SK-N-SH (cell line): ENCODE measurements at regions of chr1 and their contacts with region 1.

Region 1: GRCh38 chr1:6245086-6245868 is 1.3 kb downstream of the HES3 start:
- DNase-seq: peak; percentile 91
- H3K4me3 ChIP-seq: peak overlapping the region; percentile 44 to 48
- H3K27ac ChIP-seq: peak overlapping the region in 1 of 2 experiments; percentile 76; a peak in 2 of 4 replicates
- H3K4me1 ChIP-seq: no peaks in the 10 kb centered on the region; a peak in 1 of 4 replicates
- H3K27me3 ChIP-seq: no peaks in the 10 kb centered on the region
- CTCF ChIP-seq: peak; percentile 65
- EP300 ChIP-seq: no peak
- RAD21 ChIP-seq: peak; percentile 67

Region 2: DNA sequence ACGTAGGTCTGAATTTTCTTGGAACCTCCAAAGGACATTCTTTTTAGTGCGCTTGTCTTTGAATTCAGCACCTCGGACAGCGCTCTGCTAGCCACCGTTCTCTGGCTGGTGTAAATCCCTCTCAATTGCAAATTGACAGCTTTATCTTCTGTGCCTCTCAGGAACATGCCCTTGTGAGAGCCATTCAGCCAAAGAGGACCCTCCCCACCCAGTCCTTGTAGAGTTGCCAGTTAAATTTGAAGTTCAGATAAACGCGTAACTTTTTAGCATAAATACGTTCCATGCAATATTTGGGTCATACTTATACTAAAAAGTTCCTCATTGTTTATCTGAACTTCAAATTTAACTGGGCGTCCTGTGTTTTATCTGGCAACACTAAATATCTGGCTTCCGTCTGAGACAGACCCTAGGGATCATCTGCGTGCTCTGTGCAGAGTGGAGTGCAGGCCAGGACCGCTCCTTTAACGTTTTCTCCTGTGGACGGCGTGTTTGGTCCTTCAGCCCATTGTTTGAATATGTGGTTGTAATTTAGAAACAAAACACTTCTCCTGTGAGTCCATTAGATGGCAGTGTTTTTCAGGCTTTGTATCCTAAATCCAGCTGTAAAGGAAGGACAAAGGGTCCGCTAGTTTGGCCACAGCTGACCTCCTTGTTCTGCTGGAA is 192.6 kb before region 1 on chr1:
- CTCF ChIA-PET with region 1: interaction called, 23 read pairs
- POLR2A ChIA-PET with region 1: no interaction called
- DNase-seq: peak; percentile 86
- H3K4me3 ChIP-seq: peak overlapping the region in 1 of 2 experiments; percentile 36; a peak in 1 of 4 replicates
- H3K27ac ChIP-seq: no peak overlapping the region
- H3K4me1 ChIP-seq: peaks cover 0 to 38% of the 10 kb centered on the region in 2 experiments; a peak in 1 of 4 replicates
- H3K27me3 ChIP-seq: no peaks in the 10 kb centered on the region
- CTCF ChIP-seq: peak; percentile 62
- EP300 ChIP-seq: 0 out of 4 replicates have a peak, but pooled peaks of 1 of the 2 experiments have one; percentile 7
- RAD21 ChIP-seq: peak; percentile 94

Region 3: GRCh38 chr1:6269720-6270400 is 24.6 kb after region 1 on chr1:
- CTCF ChIA-PET with region 1: interaction called, 22 read pairs
- POLR2A ChIA-PET with region 1: no interaction called
- DNase-seq: peak; percentile 56
- H3K4me3 ChIP-seq: no peak overlapping the region
- H3K27ac ChIP-seq: peak overlapping the region in 1 of 2 experiments; percentile 78; a peak in 1 of 4 replicates
- H3K4me1 ChIP-seq: peaks cover 7 to 50% of the 10 kb centered on the region in 2 experiments; a peak in 2 of 4 replicates
- H3K27me3 ChIP-seq: no peaks in the 10 kb centered on the region
- CTCF ChIP-seq: no peak
- EP300 ChIP-seq: no peak
- RAD21 ChIP-seq: no peak

Region 4: GRCh38 chr1:6325482-6325881 is 80.2 kb after region 1 on chr1:
- CTCF ChIA-PET with region 1: interaction called, 318 read pairs
- POLR2A ChIA-PET with region 1: no interaction called
- DNase-seq: no peak
- H3K4me3 ChIP-seq: no peak overlapping the region
- H3K27ac ChIP-seq: no peak overlapping the region
- H3K4me1 ChIP-seq: peaks cover 0 to 11% of the 10 kb centered on the region in 2 experiments; a peak in 1 of 4 replicates
- H3K27me3 ChIP-seq: no peaks in the 10 kb centered on the region
- CTCF ChIP-seq: no peak
- EP300 ChIP-seq: no peak
- RAD21 ChIP-seq: no peak

Region 5: DNA sequence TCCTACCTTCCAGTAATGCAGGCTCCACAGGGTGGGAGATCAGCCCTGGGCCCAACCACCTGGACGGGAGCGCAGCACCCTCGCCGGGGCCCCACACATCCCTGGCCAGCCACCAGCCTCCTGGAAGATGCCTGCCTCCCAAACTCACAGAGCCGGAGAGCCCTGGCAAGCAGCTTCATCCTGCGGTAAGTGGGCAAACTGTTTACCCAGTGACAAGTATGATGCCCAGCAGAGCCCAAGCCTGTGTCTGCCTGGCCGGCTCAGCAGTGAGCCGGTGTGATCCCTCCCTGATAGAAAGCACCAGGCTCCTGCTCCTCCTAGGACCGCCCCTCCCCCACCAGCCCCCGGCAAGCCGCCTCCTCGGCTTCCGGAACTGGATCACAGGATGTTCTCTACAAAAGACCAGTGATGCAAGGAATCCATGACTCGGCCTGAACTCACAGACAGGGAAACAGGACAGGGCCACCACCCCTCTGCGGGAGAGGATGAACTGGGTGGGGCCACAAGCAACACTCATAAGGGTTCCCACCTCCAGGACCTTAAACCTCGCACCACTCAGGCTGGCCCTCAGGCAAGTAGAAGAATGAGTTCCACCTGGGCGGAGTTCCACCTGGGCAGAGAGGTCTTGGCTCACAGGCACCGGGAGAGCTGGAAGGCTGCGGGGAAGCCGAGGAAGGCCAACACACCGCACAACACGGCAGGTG is 140.4 kb after region 1 on chr1:
- CTCF ChIA-PET with region 1: interaction called, 22 read pairs
- POLR2A ChIA-PET with region 1: interaction called, 3 read pairs
- DNase-seq: peak; percentile 93
- H3K4me3 ChIP-seq: peak overlapping the region; percentile 45 to 66
- H3K27ac ChIP-seq: peak overlapping the region; percentile 73 to 93
- H3K4me1 ChIP-seq: peaks cover 0 to 24% of the 10 kb centered on the region in 2 experiments; a peak in 2 of 4 replicates
- H3K27me3 ChIP-seq: no peaks in the 10 kb centered on the region
- CTCF ChIP-seq: no peak
- EP300 ChIP-seq: peak in 1 of 2 experiments; percentile 69; a peak in 2 of 4 replicates
- RAD21 ChIP-seq: no peak

Region 6: DNA sequence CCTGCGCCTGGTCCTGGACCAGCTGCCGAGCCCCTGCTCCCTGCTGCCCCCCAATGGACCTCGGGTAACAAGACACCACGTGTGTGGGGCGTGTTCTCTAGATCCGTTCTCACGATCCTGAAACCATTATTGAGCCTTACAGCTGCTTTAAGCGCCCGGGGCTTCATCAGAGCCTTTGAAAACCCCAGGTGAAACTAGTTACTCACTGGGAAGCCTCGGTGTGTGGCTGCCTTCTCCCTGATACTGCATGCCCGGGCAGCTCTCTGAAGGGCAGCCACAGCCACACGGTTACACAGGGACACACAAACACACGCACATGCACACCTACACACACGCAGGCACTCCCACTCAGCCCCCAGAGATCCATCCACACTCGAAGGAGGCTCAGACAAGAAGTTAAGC is 169.2 kb after region 1 on chr1:
- CTCF ChIA-PET with region 1: interaction called, 131 read pairs
- POLR2A ChIA-PET with region 1: no interaction called
- DNase-seq: peak; percentile 87
- H3K4me3 ChIP-seq: no peak overlapping the region
- H3K27ac ChIP-seq: no peak overlapping the region
- H3K4me1 ChIP-seq: peaks cover 0 to 6% of the 10 kb centered on the region in 2 experiments; a peak in 1 of 4 replicates
- H3K27me3 ChIP-seq: peaks cover 17% of the 10 kb centered on the region
- CTCF ChIP-seq: peak; percentile 59
- EP300 ChIP-seq: no peak
- RAD21 ChIP-seq: peak; percentile 50

Region 7: GRCh38 chr1:6448749-6449631 is 203.7 kb after region 1 on chr1:
- CTCF ChIA-PET with region 1: interaction called, 100 read pairs
- POLR2A ChIA-PET with region 1: no interaction called
- DNase-seq: peak; percentile 78
- H3K4me3 ChIP-seq: peak overlapping the region in 1 of 2 experiments; percentile 12; a peak in 1 of 4 replicates
- H3K27ac ChIP-seq: no peak overlapping the region
- H3K4me1 ChIP-seq: no peaks in the 10 kb centered on the region; a peak in 1 of 4 replicates
- H3K27me3 ChIP-seq: peaks cover 44% of the 10 kb centered on the region
- CTCF ChIP-seq: no peak
- EP300 ChIP-seq: no peak
- RAD21 ChIP-seq: no peak